GM10248 (cell line): ENCODE measurements at regions of chr1 and their contacts with region 1.

Region 1: DNA sequence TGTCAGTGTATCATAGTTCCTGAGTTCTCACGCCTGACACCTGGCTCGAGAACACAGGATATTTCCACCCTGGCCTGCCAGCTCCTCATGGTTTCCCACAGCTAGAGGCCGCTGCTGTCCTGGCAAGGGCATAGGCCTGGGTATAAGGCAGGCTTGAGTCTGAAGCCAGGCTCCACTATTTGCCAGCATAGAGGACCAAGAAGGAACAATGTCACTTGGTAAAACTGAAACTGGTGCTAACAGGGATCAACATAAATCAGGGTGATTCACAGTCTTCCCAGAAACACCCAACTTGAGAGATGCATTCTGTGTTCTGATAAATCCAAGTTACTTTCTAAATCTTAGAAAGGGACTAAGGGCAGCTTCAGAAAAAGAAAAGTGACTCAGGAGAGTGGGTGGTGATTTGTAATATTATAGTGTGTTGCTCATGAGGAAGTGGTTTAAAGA is 6.9 kb upstream of the S100A2 start:
- DNase-seq: peak; percentile 69
- CTCF ChIP-seq: peak; percentile 78

Region 2: DNA sequence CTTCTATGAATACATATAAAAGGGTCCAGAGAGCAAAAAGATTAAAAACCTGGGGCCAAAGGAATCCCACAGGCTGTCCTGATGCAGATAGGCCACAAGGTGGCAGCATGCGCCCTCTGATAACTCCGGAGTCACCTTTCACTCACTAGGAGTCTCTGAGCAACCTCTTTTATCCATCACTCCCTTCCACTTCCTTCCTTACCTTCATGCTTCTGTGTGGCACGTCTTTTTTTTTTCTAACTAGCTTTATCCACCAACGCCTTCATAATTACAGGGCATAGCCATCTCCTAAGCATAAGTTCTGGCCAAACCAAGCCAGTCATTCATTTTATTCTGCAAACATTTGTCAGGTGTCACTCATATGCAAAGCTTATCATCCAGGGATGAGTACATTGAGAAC is 220.1 kb before region 1 on chr1:
- CTCF ChIA-PET with region 1: interaction called, 16 read pairs
- POLR2A ChIA-PET with region 1: no interaction called
- DNase-seq: peak; percentile 75
- CTCF ChIP-seq: peak; percentile 93

Region 3: DNA sequence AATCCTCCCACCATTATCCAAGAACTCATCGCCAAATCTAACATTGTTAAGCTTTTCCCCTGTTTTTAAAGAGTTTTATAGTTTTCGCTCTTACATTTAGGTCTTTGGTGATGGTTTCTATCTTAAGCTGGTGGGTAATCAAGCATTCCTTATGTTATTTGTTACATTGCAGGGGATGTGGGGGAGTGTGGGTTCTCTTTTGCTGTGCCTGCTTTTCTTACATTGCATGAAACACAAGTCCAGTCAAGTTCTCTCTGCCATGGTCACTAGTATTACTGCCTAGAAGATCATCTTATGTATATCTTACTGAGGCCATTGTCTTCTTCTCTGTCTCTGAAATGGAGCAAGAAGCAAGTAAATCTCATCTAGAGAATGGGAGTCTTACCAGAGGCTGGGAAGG is 84.9 kb before region 1 on chr1:
- CTCF ChIA-PET with region 1: no interaction called
- POLR2A ChIA-PET with region 1: no interaction called
- DNase-seq: no peak
- CTCF ChIP-seq: no peak

Region 4: DNA sequence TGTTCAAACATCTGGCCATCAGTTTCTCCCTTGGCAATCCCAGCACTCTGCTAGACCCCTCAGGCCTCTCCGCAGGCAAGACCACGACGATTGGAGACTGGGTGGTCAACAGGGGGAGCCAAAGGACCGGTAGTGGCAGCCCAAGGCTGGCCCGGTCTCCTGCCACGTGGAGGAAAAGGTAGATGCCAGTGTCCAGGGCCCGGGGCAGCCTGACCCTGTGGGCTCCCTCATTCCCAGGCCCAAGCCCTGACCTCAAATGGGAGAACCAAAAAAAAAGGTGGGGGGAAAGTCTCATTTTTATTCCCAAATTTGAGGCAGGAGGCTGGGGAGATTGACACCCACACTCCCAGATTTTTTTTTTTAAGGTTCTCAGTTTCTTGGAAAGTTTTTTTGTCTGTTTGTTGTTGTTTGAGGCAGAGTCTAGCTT is 61.6 kb before region 1 on chr1:
- CTCF ChIA-PET with region 1: interaction called, 109 read pairs
- POLR2A ChIA-PET with region 1: no interaction called
- DNase-seq: peak; percentile 89
- CTCF ChIP-seq: peak; percentile 92

Region 5: GRCh38 chr1:153532769-153533599 is 39.6 kb before region 1 on chr1:
- CTCF ChIA-PET with region 1: interaction called, 126 read pairs
- POLR2A ChIA-PET with region 1: no interaction called
- DNase-seq: peak; percentile 83
- CTCF ChIP-seq: peak; percentile 87

Region 6: DNA sequence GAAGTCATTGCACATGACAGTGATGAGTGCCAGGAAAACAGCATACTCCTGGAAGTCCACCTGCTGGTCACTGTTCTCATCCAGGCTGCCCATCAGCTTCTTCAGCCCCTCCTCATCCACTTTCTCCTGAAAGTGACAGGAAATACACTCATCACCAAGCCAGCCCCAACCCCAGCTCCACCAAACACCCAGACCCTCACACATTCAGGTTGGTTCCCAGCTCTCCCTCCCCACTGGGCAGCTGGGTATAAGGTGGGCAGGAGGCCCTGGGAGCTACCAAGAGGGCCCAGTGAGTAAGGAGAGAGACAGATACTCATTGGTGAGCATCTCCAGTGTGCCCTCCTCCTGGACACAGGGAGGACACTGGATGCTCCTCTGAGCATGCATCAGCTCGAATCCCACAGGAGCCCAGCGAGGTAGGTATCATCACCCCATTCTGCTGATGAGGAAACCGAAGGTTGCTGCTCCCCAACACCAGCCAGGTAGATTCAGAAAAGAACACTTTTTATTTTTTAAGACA is 11.1 kb before region 1 on chr1:
- CTCF ChIA-PET with region 1: interaction called, 11 read pairs
- POLR2A ChIA-PET with region 1: no interaction called
- DNase-seq: no peak
- CTCF ChIP-seq: no peak

Region 7: GRCh38 chr1:153598309-153599172 is 25.9 kb after region 1 on chr1:
- CTCF ChIA-PET with region 1: interaction called, 13 read pairs
- POLR2A ChIA-PET with region 1: no interaction called
- DNase-seq: peak; percentile 88
- CTCF ChIP-seq: no peak

Region 8: DNA sequence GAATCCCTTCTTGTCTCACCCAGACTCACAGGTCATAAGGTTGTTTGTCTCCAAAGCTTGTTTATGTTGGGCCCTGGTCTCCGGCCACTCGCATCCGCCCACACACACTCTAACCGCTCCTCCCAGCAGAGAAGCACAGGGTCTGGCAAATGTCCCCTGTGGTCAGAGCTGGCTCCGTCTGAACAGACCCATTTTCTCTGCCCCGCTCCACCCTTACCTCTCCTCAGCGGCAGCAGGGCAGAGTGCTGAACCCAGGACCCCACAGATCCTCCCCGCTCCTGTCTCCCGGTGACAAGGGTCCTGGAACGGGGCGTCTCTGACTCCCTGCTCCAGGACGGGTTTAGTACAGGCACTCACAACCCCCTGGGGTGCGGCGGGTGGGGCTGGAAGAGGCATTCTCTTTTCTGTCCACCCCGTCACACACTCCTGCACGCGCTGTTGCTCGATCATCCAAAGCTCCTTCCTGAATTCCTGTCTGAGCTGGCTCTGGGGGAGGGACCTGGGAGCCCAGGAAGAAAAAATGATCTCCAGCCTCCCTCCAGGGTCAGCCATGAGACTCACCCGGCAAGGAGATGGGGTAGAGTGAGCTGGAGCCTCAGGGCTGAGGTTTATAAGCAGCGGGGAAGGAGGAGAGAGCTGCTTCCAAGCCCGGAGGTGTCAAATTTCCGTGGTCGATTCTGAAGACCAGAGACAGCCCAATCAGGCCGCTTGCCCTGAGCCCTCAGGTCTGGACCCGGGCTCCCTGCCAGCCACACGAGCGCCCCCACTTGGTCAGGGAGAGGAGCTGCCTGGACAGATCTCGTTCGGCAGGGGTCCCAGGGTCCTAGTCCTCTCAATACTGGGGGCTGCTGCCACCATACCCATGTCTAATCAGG is 54.6 kb after region 1 on chr1 and contains the start of gene S100A13:
- CTCF ChIA-PET with region 1: interaction called, 22 read pairs
- POLR2A ChIA-PET with region 1: interaction called, 3 read pairs
- DNase-seq: peak; percentile 69
- CTCF ChIP-seq: peak; percentile 66

Region 9: DNA sequence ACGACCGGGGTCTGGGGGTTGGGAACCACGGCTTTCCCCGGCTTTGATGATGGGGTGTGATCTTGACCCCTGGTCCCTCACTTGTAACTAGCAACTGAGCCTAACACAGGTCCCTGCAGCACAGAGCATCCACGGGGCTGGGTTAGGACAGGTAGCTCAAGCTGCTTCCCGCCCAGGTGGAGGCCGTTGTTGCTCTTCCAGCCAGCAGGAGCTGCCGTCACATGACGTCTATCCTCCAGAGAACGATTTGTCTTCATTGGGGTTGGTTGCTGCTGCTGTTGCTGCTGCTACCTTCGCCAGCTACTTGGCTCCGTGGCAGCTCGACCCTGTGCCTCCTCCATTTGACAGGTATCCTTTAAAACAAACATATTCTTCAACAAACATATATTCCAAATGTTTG is 1109.7 kb after region 1 on chr1:
- CTCF ChIA-PET with region 1: no interaction called
- POLR2A ChIA-PET with region 1: no interaction called
- DNase-seq: no peak
- CTCF ChIP-seq: no peak